Right ventricle myocardium superior (tissue), 1 donor: ENCODE measurements at regions of chr2 and their contacts with region 1.

Region 1: DNA sequence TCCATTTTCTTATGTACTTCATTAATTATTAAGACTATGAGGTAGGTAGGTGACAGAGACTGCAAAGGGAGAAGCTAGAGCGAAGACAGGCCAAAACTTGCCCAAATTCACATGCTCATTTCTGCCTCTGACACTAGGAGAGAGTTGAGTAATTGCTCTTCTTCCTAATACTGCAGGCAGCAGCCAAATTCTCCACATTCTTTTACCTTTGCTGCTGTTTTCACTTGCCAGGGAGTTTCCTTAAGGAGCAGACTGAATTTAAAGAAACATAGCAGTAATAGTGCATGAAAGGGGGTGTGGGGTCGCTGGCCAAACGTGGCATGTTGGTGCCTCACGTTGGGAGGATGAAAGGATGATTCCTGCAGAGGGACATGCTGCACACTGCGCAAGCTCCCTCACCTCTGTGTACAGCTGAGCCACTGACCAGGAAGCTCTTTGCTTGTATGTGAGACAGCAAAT is 12.3 kb downstream of the CRIM1 start:
- DNase-seq: no peak
- ATAC-seq: no peak

Region 2: GRCh38 chr2:36246320-36246990 is 121.5 kb before region 1 on chr2:
- intact Hi-C with region 1: no loop called
- DNase-seq: no peak
- ATAC-seq: no peak

Region 3: DNA sequence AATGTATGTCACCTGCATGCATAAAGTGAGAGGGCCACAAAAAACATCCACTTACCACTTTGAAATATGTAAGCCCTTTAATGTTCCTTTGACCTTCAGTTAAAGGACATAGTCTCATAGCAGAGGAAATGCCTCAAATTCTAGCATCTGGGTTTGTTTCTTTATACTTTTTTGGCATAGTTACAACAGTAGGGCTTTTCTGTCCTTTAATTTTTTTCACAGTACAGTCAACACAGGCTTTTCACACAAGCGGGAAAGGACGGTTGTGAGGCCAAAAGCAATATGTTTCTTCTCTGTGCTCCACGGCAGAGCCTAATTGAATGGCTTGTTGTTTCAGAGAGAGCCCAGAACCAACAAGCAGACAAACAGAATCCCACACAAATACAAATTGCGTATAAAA is 45.3 kb after region 1 on chr2:
- intact Hi-C with region 1: loop called (anchors 10 kb)
- DNase-seq: no peak
- ATAC-seq: no peak